Sigmoid colon (tissue), 7 donors: ENCODE measurements at regions of chr4 and their contacts with region 1.

Region 1: DNA sequence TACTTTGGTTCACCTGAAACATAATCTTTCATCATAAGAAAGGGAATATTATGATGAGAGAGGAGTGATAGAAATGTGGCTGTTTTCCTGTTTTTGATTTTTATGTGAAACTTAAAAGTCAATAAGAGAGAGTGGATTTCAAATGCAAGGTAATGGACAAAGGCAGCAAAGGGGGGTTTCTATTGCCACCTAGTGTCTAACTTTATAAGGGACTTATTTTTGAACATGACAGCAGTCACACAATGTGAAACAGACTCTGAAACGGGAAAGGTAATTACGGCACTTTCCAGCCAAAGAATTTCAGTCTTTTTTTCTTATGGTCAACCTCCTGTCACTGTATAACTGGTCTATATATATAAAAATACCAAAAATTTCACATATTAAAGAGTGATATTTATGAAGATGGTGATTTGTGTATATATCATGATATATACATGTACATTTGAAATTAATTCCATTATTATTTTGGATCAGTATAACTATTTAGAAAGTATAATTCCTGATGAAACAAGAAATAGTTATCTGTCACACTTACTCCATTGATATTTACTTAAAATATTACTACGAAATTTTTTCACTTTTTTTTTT is 127.1 kb downstream of the FBXO8 start:
- DNase-seq: no peak
- H3K4me3 ChIP-seq: peak overlapping the region in 2 of 4 donors; percentile 11 to 16
- H3K27ac ChIP-seq: peak overlapping the region in 3 of 4 donors; percentile 75 to 82 (median 79)
- H3K4me1 ChIP-seq: peaks cover 0 to 51% (median 26%) of the 10 kb centered on the region in 4 donors
- H3K27me3 ChIP-seq: no peaks in the 10 kb centered on the region
- CTCF ChIP-seq: peak; percentile 45 to 64 (median 62)
- EP300 ChIP-seq: no peak
- POLR2A ChIP-seq: no peak

Region 2: GRCh38 chr4:173505924-173506518 is 650.3 kb before region 1 on chr4:
- intact Hi-C with region 1: loop called (anchors 2 kb)
- DNase-seq: peak; percentile 90
- H3K4me3 ChIP-seq: peak overlapping the region in 2 of 4 donors; percentile 58 to 70
- H3K27ac ChIP-seq: peak overlapping the region; percentile 14 to 99 (median 92)
- H3K4me1 ChIP-seq: peaks cover 0 to 56% (median 41%) of the 10 kb centered on the region in 4 donors
- H3K27me3 ChIP-seq: no peaks in the 10 kb centered on the region
- CTCF ChIP-seq: peak; percentile 69 to 71 (median 70)
- EP300 ChIP-seq: no peak
- POLR2A ChIP-seq: no peak

Region 3: DNA sequence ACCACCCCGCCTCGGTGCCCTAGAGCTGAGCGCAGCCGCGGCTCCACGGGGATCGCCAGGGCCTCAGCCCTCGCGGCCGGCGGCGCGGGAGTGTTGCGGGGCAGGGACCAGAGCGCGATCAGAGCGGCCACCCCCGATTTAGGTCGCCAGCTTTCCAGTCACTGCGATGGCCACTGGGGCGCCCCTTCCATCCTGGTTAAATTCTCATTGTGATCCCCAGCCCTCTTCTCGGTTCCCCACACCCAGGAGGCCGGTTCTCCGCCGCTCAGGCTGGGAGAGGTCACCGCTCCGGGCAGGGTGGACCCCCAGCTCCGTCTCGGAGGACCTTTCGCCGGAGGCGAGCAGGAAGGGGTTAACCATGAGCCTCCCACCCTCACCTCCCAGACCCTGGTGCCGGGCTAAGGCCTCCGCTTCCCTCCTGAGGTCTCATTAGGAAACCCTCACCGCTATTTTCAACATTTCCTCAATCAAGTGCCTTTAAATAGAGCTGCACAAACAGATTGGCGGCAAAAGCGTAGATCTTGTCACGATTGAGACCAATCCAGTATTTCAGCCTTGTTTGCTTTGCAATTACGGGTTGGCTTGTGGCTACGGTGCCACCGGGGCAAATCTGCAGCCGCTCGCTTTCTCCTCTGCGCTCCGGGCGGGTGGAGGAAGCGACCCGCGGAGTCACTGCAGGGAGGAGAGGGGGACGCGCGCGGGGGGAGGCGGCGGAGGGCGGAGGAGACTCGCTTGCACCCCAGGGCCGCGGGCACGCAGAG is 618.0 kb before region 1 on chr4:
- intact Hi-C with region 1: loop called (anchors 5 kb)
- DNase-seq: peak; percentile 81
- H3K4me3 ChIP-seq: peak overlapping the region; percentile 27 to 96 (median 92)
- H3K27ac ChIP-seq: peak overlapping the region; percentile 70 to 99 (median 99)
- H3K4me1 ChIP-seq: peaks cover 0 to 85% (median 61%) of the 10 kb centered on the region in 4 donors
- H3K27me3 ChIP-seq: no peaks in the 10 kb centered on the region
- CTCF ChIP-seq: peak in 1 of 4 experiments; percentile 10
- EP300 ChIP-seq: no peak
- POLR2A ChIP-seq: no peak

Region 4: GRCh38 chr4:173748353-173748752 is 408.0 kb before region 1 on chr4:
- intact Hi-C with region 1: loop called (anchors 5 kb)
- DNase-seq: no peak
- H3K4me3 ChIP-seq: no peak overlapping the region
- H3K27ac ChIP-seq: peak overlapping the region in 3 of 4 donors; percentile 4 to 42 (median 16)
- H3K4me1 ChIP-seq: peaks cover 0 to 32% (median 17%) of the 10 kb centered on the region in 4 donors
- H3K27me3 ChIP-seq: no peaks in the 10 kb centered on the region
- CTCF ChIP-seq: peak in 1 of 4 experiments; percentile 22
- EP300 ChIP-seq: no peak
- POLR2A ChIP-seq: no peak

Region 5: DNA sequence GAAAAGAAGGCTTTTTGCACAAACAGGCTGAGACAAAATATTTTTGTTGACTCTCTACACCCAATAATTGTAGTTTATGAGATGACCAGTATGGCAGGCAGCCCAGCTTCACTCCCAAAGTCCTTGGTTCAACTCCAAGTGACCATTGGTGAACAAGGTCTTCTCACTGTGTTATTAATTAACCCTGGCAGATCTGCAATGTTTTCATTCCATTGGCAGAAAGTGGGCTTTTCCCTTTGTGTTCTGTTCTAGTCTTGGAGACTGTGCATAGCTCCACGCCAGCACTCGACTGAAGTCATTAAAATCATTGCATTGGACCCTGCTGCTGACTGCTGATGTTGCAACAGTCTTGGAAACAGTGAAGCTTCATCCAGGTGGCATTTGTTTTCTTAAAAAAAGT is 349.0 kb before region 1 on chr4:
- intact Hi-C with region 1: loop called (anchors 10 kb)
- DNase-seq: peak; percentile 84
- H3K4me3 ChIP-seq: no peak overlapping the region
- H3K27ac ChIP-seq: peak overlapping the region in 3 of 4 donors; percentile 45 to 60 (median 54)
- H3K4me1 ChIP-seq: peaks cover 0 to 36% (median 23%) of the 10 kb centered on the region in 4 donors
- H3K27me3 ChIP-seq: no peaks in the 10 kb centered on the region
- CTCF ChIP-seq: no peak
- EP300 ChIP-seq: no peak
- POLR2A ChIP-seq: no peak

Region 6: GRCh38 chr4:173990126-173990868 is 166.0 kb before region 1 on chr4:
- intact Hi-C with region 1: loop called (anchors 5 kb)
- DNase-seq: no peak
- H3K4me3 ChIP-seq: no peak overlapping the region
- H3K27ac ChIP-seq: peak overlapping the region; percentile 43 to 73 (median 63)
- H3K4me1 ChIP-seq: peaks cover 0 to 42% (median 28%) of the 10 kb centered on the region in 4 donors
- H3K27me3 ChIP-seq: no peaks in the 10 kb centered on the region
- CTCF ChIP-seq: peak; percentile 48 to 67 (median 56)
- EP300 ChIP-seq: no peak
- POLR2A ChIP-seq: no peak

Region 7: GRCh38 chr4:174318829-174319764 is 162.8 kb after region 1 on chr4:
- intact Hi-C with region 1: loop called (anchors 5 kb)
- DNase-seq: no peak
- H3K4me3 ChIP-seq: no peak overlapping the region
- H3K27ac ChIP-seq: peak overlapping the region in 1 of 4 donors; percentile 17
- H3K4me1 ChIP-seq: peaks cover 0 to 25% (median 0%) of the 10 kb centered on the region in 4 donors
- H3K27me3 ChIP-seq: no peaks in the 10 kb centered on the region
- CTCF ChIP-seq: peak in 3 of 4 experiments; percentile 59 to 79 (median 70)
- EP300 ChIP-seq: no peak
- POLR2A ChIP-seq: no peak